Upper lobe of right lung (tissue), 1 donor: ENCODE measurements at regions of chr6 and their contacts with region 1.

Region 1: GRCh38 chr6:63598049-63599036 is 26.1 kb downstream of the LOC128125822 start:
- DNase-seq: peak; percentile 76
- ATAC-seq: peak; percentile 99
- H3K4me3 ChIP-seq: peak overlapping the region; percentile 56
- H3K27ac ChIP-seq: no peak overlapping the region
- H3K4me1 ChIP-seq: peaks cover 9% of the 10 kb centered on the region
- H3K27me3 ChIP-seq: peaks cover 4% of the 10 kb centered on the region
- CTCF ChIP-seq: peak; percentile 92

Region 2: GRCh38 chr6:63458480-63459115 is 139.7 kb before region 1 on chr6:
- intact Hi-C with region 1: no loop called
- DNase-seq: no peak
- ATAC-seq: peak; percentile 90
- H3K4me3 ChIP-seq: no peak overlapping the region
- H3K27ac ChIP-seq: peak overlapping the region; percentile 56
- H3K4me1 ChIP-seq: no peaks in the 10 kb centered on the region
- H3K27me3 ChIP-seq: no peaks in the 10 kb centered on the region
- CTCF ChIP-seq: no peak

Region 3: GRCh38 chr6:63764318-63764916 is 166.1 kb after region 1 on chr6:
- intact Hi-C with region 1: loop called (anchors 10 kb)
- DNase-seq: no peak
- ATAC-seq: no peak
- H3K4me3 ChIP-seq: no peak overlapping the region
- H3K27ac ChIP-seq: no peak overlapping the region
- H3K4me1 ChIP-seq: no peaks in the 10 kb centered on the region
- H3K27me3 ChIP-seq: no peaks in the 10 kb centered on the region
- CTCF ChIP-seq: peak; percentile 72